AG04450 (cell line): ENCODE measurements at regions of chr4 and their contacts with region 1.

Region 1: DNA sequence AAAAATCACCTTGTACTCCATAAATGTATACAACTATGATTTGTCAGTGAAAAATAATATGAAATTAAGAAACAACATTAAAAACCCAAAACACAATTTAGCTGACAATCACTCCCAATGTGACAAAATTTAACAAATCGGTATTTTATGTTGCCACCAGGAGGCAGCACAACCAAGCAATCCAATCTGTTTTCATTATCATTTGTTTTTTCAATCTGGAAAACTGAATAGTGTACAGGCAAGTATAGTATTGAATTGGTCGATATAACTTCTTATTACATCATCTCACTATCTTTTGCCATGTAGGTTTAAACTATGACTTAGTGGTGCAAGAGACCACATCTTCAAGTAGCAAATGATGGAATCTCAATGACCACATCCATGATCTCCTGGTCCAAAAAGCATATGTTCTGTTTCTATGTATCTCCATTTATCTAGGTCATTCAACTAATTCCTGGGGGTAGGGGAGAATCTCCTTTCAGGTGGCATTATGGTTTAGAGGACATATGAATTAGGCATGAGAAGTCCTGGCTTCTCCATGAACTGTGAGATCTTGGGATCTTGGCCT is 112.9 kb upstream of the AGA start:
- DNase-seq: no peak
- H3K4me3 ChIP-seq: no peak overlapping the region
- H3K27ac ChIP-seq: no peak overlapping the region
- H3K27me3 ChIP-seq: no peaks in the 10 kb centered on the region
- CTCF ChIP-seq: peak; percentile 72

Region 2: GRCh38 chr4:177499537-177499936 is 55.6 kb before region 1 on chr4:
- CTCF ChIA-PET with region 1: no interaction called
- POLR2A ChIA-PET with region 1: no interaction called
- DNase-seq: no peak
- H3K4me3 ChIP-seq: no peak overlapping the region
- H3K27ac ChIP-seq: no peak overlapping the region
- H3K27me3 ChIP-seq: no peaks in the 10 kb centered on the region
- CTCF ChIP-seq: no peak

Region 3: GRCh38 chr4:177528620-177529019 is 26.5 kb before region 1 on chr4:
- CTCF ChIA-PET with region 1: interaction called, 11 read pairs
- POLR2A ChIA-PET with region 1: no interaction called
- DNase-seq: no peak
- H3K4me3 ChIP-seq: no peak overlapping the region
- H3K27ac ChIP-seq: no peak overlapping the region
- H3K27me3 ChIP-seq: no peaks in the 10 kb centered on the region
- CTCF ChIP-seq: no peak